Right ventricle myocardium superior (tissue), 1 donor: ENCODE measurements at regions of chr15 and their contacts with region 1.

Region 1: GRCh38 chr15:50493625-50494024 is 52.8 kb downstream of the USP50 start:
- DNase-seq: no peak
- ATAC-seq: peak; percentile 79

Region 2: DNA sequence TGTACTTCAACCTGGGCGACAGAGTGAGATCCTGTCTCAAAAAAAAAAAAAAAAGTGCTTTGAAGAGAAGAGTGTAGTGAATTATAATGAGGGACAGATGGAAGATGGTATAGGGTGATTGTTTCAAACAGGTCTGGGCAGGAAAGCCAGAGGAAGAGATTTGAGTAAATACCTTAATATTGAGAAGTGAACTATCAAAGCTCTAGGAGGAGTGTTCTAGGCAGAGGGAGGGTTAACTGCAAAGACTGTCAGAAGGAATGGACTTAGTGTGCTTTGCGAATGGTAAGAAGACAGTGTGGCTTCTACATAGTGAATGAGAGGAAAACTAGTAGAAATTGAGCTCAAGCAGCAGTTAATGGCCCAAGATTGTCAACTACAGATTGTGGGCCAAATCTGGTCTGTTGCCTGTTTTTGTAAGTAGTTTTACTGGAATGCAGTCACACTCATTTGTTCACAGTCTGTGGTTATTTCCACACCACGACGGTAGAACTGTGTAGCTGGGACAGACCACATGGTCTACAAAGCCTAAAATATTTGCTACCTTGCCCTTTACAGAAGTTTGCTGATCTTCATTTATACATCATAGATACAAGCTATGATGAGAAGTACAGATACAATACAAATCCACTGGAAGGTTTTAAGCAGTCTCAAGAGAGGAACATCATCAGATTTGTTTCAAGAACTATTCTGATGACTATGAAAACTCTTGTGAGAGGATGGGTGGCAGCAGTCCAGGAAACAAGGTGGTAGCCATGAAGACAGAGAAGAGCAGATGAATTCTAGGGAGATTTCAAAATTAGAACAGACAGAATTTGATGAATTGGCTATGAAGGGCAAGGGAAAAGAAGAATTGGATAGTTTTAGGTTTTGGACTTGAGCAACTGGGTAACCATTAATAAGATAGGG is 69.4 kb after region 1 on chr15:
- intact Hi-C with region 1: loop called (anchors 5 kb)
- DNase-seq: no peak
- ATAC-seq: no peak

Region 3: GRCh38 chr15:51828621-51829359 is 1335.2 kb after region 1 on chr15:
- intact Hi-C with region 1: no loop called
- DNase-seq: no peak
- ATAC-seq: no peak